Adrenal gland (tissue), 19 donors: ENCODE measurements at regions of chr1 and their contacts with region 1.

Region 1: GRCh38 chr1:20633190-20634064 is at the start of gene PINK1:
- DNase-seq: peak; percentile 82 to 94 (median 85)
- H3K4me3 ChIP-seq: peak within 1 kb of the TSS; percentile 3 to 98 (median 71)
- H3K27ac ChIP-seq: peak within 1 kb of the TSS; percentile 87 to 99 (median 93)
- H3K4me1 ChIP-seq: peaks cover 22 to 29% of the 10 kb centered on the region in 2 donors
- H3K27me3 ChIP-seq: no peaks in the 10 kb centered on the region
- CTCF ChIP-seq: peak; percentile 89 to 100 (median 96)
- POLR2A ChIP-seq: peak; percentile 91 to 96
- total RNA-seq, gene PINK1: 98.4 to 586 (median 305) TPM

Region 2: GRCh38 chr1:20411196-20411980 is 222.0 kb before region 1 on chr1:
- intact Hi-C with region 1: no loop called
- DNase-seq: peak; percentile 70 to 90 (median 81)
- H3K4me3 ChIP-seq: no peak overlapping the region
- H3K27ac ChIP-seq: peak overlapping the region in 1 of 5 donors; percentile 41
- H3K4me1 ChIP-seq: no peaks in the 10 kb centered on the region
- H3K27me3 ChIP-seq: no peaks in the 10 kb centered on the region
- CTCF ChIP-seq: no peak
- POLR2A ChIP-seq: no peak

Region 3: GRCh38 chr1:20574686-20575540 is 58.5 kb before region 1 on chr1:
- intact Hi-C with region 1: loop called (anchors 2 kb)
- DNase-seq: peak; percentile 85 to 95 (median 93)
- H3K4me3 ChIP-seq: no peak overlapping the region
- H3K27ac ChIP-seq: no peak overlapping the region
- H3K4me1 ChIP-seq: no peaks in the 10 kb centered on the region
- H3K27me3 ChIP-seq: no peaks in the 10 kb centered on the region
- CTCF ChIP-seq: peak; percentile 73 to 87 (median 83)
- POLR2A ChIP-seq: no peak

Region 4: DNA sequence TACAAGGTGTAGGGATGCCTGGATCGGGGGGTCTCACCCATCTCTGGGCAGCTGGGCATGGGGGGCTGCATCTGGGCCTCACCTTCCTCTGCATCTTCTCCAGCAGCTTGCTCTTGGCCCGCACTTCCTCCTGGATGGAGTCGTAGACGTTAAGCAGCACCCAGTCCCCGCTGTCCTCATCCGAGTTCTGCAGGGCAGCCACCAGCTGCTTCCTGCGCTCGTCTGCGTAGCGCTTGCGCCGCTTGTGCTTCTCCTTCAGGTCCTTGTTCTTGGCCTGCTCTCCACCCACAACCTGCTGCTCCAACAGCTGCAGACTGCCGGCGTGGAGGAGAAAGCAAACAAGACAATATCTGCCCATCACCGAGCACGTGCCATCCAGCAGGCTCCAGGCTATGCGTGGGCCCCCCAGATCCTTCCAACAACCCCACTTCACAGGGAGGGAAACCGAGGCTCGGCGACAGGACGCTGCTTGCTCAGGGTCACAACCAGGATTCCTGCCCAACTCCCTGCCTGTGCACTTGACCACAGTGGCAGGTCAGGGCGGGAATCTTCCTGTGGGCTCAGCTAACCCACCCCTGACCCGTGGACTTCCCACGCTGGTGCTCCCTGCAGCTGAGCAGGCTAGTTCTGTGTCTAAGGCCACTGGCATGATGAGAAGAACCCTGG is 49.3 kb after region 1 on chr1:
- intact Hi-C with region 1: no loop called
- DNase-seq: peak in 2 of 7 donors; percentile 37 to 59
- H3K4me3 ChIP-seq: no peak overlapping the region
- H3K27ac ChIP-seq: peak overlapping the region in 1 of 5 donors; percentile 6
- H3K4me1 ChIP-seq: peaks cover 24 to 41% of the 10 kb centered on the region in 2 donors
- H3K27me3 ChIP-seq: no peaks in the 10 kb centered on the region
- CTCF ChIP-seq: no peak
- POLR2A ChIP-seq: no peak